ENCODE measurements at regions of chr3 and their contacts with region 1.

Region 1: DNA sequence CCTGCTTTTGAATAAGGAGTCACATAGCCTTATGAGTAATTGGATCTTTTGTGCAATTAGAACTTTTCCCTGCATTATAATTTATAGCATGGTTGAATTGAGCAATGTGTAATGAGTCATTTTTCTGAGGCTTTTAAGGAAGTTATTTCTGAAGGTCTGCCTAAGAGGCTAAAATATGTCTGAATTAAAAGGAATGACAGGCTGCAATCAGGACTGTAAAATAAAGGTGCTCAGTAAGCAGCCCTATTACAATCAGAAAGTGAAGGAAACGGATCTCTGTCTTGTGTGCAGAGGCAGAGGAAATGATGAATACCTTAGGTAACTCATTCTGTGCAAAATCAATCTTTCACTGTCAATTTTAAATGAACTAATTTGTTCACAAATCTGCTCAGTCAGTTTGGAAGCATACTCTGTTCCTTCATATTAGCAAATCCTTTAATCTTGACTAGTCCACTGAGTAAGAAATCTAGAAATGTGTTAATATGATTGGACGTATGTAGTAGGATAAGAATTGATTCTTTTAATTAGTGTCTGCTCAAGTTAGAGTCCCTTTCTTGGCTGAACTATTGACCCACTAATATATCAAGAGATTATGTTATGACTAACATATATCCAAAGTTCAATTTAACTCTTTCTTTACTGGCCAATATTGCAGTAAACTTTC is 290.1 kb downstream of the ZIC1 start:
- DNase-seq: peak; percentile 24
- H3K4me3 Mint-ChIP-seq: peak overlapping the region; percentile 27
- H3K27ac Mint-ChIP-seq: peak overlapping the region; percentile 76
- H3K4me1 Mint-ChIP-seq: peaks cover 33% of the 10 kb centered on the region
- H3K27me3 Mint-ChIP-seq: no peaks in the 10 kb centered on the region
- CTCF ChIP-seq: no peak

Region 2: DNA sequence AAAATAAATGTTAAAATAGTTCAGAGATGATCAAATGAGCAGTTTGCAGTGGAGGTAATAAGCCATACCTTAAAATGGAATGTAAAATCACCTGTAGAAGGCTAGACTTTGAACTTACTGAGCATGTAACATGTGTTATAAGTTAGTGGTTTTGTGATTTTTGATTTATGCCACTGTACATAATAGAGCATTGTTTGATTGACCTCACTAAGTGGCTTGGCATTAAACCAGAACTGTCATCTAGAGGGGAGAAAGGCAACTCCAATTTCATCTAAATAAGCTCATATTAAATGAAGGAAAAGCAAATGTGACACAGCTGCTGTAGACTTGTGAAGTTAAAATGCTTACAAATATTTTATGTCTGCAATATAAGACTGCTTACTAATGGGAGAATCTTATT is 97.8 kb after region 1 on chr3:
- CTCF ChIA-PET with region 1: no interaction called
- intact Hi-C with region 1: loop called (anchors 2 kb)
- DNase-seq: peak; percentile 37
- H3K4me3 Mint-ChIP-seq: no peak overlapping the region
- H3K27ac Mint-ChIP-seq: peak overlapping the region; percentile 27
- H3K4me1 Mint-ChIP-seq: peaks cover 37% of the 10 kb centered on the region
- H3K27me3 Mint-ChIP-seq: no peaks in the 10 kb centered on the region
- CTCF ChIP-seq: no peak

Region 3: DNA sequence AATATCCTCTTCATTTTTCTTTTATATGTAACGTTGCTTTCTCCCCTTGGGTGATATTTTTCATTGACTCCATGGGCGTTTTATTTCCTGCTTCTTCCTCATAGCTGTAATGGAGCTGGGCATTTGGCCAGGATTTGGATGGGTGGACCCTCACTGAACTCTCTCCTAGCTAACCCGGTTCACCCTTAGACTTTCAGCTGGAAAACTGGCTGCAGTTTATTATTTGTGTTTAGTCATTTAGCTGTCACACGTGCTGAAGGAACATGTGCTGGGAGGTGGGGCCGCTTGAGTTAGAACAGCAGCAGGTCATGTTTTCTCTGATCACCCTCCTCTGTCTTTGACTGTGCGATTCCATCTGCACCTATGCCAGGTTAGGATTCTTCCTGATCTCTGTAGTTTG is 117.5 kb after region 1 on chr3:
- CTCF ChIA-PET with region 1: no interaction called
- intact Hi-C with region 1: loop called (anchors 5 kb)
- DNase-seq: peak; percentile 88
- H3K4me3 Mint-ChIP-seq: peak overlapping the region; percentile 25
- H3K27ac Mint-ChIP-seq: peak overlapping the region; percentile 84
- H3K4me1 Mint-ChIP-seq: peaks cover 14% of the 10 kb centered on the region
- H3K27me3 Mint-ChIP-seq: no peaks in the 10 kb centered on the region
- CTCF ChIP-seq: no peak

Measured in Calu3 (cell line).